ENCODE measurements at regions of chr3 and their contacts with region 1.

Region 1: GRCh38 chr3:57227204-57227929 is at the start of gene APPL1:
- DNase-seq: peak; percentile 76 to 97 (median 82)
- ATAC-seq: peak; percentile 96
- H3K4me3 ChIP-seq: peak within 1 kb of the TSS; percentile 88
- H3K4me3 Mint-ChIP-seq: peak within 1 kb of the TSS; percentile 89 to 95 (median 93)
- H3K27ac ChIP-seq: peak within 1 kb of the TSS; percentile 71
- H3K27ac Mint-ChIP-seq: peak within 1 kb of the TSS; percentile 72 to 90 (median 86)
- H3K4me1 ChIP-seq: peaks cover 9 to 12% of the 10 kb centered on the region in 2 donors
- H3K4me1 Mint-ChIP-seq: peaks cover 17 to 38% (median 29%) of the 10 kb centered on the region in 7 donors
- H3K27me3 ChIP-seq: no peaks in the 10 kb centered on the region
- H3K27me3 Mint-ChIP-seq: peaks cover 0 to 5% (median 0%) of the 10 kb centered on the region in 5 donors
- total RNA-seq, gene APPL1: 25.4 to 42.1 (median 29.2) TPM

Region 2: DNA sequence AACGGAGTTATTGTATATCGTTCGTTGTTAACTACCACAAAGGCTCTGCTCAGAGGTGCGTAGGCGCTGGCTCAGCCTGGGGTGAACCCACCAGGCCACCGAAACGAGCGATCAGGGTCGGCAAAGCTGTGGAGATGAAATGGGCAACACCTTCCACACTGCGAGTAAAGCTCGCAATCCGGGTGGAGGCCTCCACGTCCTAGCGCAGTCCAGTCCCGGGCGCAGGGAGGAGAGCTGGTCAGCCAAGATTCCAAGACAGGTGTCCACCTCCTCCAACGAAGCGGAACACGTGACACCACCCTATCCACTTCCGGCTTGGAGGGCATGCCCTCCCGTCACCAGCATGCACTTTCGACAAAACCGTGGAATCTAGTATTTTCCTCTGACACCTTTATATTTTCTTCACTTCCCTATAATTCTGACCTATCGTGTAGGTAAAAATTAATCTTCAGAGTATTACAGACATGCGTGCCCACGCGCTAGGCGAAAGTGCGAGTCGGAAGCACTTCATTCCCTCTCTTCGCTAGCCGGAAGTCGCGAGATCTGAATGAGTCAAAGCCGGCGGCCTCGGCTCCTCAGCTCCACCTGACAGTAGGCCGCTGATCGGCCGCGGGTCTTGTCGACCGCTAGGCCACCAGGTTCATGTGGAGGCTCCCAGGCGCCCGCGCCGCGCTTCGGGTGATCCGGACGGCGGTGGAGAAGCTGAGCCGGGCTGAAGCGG is 328.5 kb after region 1 on chr3 and contains the start of gene PDE12:
- CTCF ChIA-PET with region 1: interaction called, 4 read pairs
- POLR2A ChIA-PET with region 1: no interaction called
- intact Hi-C with region 1: loop called (anchors 1 to 2 kb)
- DNase-seq: peak; percentile 68 to 87 (median 81)
- ATAC-seq: peak; percentile 86
- H3K4me3 ChIP-seq: peak within 1 kb of the TSS; percentile 74
- H3K4me3 Mint-ChIP-seq: peak within 1 kb of the TSS; percentile 85 to 99 (median 92)
- H3K27ac ChIP-seq: peak within 1 kb of the TSS; percentile 96
- H3K27ac Mint-ChIP-seq: peak within 1 kb of the TSS; percentile 94 to 99 (median 98)
- H3K4me1 ChIP-seq: peaks cover 22 to 26% of the 10 kb centered on the region in 2 donors
- H3K4me1 Mint-ChIP-seq: peaks cover 13 to 50% (median 39%) of the 10 kb centered on the region in 7 donors
- H3K27me3 ChIP-seq: no peaks in the 10 kb centered on the region
- H3K27me3 Mint-ChIP-seq: no peaks in the 10 kb centered on the region
- total RNA-seq, gene PDE12: 24.0 to 35.5 (median 27.8) TPM